Astrocyte of the cerebellum (primary cell): ENCODE measurements at regions of chr3 and their contacts with region 1.

Region 1: GRCh38 chr3:69161587-69162307 is 39.4 kb upstream of the LMOD3 start:
- DNase-seq: peak; percentile 43
- H3K4me3 ChIP-seq: no peak overlapping the region
- CTCF ChIP-seq: peak; percentile 89

Region 2: DNA sequence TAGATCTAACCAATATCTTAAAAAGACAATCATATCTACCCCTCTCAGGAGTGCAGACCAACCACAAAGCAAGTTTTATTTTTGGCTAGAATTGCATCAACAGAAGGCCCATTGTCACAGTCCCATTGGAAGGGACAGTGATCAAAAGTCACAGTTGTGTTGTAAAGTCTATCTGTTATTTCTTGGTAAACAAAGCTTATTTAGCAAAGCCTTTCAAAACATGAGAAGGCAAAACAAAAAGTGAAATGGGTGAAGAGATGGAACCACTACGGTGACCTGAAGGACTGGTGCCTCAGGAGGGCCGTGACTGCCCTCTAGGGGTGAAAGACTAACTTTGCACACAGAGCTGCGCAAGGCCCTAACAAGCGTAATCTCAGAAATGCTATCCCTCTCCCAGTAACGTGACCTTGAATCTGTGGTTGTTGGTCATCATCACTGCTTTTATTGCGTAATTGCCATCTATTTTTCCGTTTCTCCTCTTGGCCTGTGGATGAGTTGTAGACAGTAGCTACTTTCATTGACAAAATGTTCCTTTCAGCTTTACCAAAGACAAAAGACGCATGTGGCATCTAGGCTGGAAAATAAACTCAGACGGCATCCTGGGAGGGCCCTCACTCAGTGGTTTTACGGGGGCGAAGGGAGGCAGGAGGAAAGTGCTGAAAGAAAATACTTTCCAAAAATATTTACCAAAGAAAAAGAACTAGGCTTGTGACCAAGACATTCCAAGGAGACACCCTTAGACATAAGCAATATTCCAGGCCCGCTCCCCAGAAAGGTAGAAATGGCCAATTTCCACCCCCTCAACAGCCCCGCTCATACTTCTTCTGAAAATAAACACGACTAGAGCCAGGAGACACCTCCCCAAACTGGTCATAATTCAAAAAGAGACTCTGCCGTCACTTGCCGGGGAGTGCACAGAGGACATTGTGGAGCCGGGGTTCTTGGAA is 144.8 kb after region 1 on chr3:
- in situ Hi-C with region 1: loop called (anchors 25 kb)
- DNase-seq: peak; percentile 63
- H3K4me3 ChIP-seq: no peak overlapping the region
- CTCF ChIP-seq: peak; percentile 92

Region 3: DNA sequence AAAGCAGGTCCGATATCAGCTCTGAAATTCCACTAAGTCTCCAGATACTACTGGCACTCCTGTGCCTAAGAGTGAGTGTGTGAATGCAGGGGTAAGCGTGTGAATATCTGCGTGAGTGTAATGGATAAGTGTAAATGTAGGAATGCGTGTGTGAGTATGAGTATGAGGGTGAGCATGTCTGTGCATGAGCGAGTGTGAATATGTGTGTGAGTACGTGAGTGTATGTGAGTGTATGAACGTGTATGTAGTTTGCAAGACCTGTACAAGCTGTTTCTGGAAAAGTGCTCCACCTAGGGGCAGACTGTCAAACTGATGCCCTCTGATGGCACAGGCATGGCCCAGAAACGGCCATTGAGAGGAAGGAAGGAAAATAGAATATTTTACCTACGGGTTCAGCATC is 248.5 kb after region 1 on chr3:
- in situ Hi-C with region 1: loop called (anchors 25 kb)
- DNase-seq: peak; percentile 32
- H3K4me3 ChIP-seq: no peak overlapping the region
- CTCF ChIP-seq: peak; percentile 87

Region 4: DNA sequence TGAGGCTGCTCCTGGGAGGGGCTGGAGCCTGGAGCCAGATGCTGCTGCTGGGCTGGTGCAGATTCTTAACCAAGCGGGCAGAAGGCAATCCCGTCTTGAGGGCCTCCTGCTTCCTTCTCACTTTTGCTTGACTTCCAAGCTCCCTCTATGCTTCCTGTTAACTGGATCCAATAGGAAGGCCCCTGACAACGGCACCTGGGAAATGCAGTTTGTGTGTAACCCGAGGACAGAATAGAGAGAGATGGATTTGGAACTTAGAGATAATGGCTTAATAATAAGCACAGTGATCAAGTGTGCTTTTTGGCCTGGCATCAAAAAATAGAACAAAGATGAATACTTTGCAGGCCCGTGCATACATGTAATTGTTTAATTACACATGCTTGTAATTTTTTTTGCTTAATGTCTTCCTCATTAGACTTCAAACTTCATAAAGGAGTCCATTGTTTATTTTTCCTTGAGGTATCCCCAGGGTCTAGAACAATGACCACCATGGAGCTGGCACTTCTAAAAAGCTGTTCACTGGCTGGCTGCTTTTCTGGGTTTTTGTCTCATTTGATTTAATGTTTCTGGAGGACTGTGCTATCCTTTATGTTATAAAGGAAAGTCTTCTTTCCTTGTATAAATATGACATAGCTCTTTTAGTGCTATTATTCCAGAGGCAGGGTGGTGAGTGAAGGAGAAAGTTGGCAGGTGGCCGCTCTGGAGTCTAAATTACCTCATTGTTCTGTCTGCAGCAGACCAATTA is 514.2 kb after region 1 on chr3:
- in situ Hi-C with region 1: loop called (anchors 25 kb)
- DNase-seq: no peak
- H3K4me3 ChIP-seq: no peak overlapping the region
- CTCF ChIP-seq: no peak